ENCODE measurements at regions of chr17 and their contacts with region 1.

Region 1: DNA sequence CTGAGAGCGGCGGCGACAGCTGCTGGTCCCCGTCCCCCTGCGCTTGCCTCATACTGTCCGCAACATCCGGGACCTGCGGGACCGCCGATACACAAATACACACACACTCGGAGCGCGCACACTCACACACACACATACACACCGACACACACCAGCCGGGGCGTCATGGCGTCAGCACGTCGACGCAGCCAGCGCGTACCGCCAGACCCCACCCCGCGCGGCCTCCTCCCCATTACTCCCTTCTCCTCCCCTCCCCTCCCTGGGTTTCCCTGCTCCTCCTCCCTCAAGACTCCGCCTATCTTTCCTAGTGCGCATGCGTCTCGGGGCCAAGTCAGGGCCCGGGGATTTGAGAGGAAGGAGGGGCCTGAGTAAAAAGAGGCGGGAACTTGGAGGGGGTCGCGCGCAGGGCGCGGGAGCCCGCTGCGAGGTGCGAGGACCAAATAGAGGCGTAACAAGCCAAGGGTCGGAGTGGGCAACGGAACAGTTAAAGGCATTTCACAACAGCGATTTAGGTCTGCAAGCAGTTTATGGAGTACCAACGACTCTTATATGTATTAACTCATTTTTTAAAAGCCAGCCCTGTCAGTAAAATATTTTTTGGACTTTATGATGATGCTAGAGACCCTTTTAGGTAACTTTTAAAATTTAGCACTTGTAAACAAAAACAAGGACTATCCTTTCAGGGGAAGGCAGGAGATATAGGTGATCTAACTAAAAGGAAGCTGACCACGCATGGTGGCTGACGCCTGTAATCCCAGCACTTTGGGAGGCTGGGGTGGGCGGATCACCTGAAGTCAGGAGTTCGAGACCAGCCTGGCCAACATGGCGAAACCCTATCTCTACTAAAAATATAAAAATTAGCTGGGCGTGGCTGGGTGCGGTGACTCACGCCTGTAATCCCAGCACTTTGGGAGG is at the start of gene SPOP:
- DNase-seq: peak; percentile 99
- H3K4me3 ChIP-seq: peak within 1 kb of the TSS; percentile 71 to 78 (median 71)
- H3K27ac ChIP-seq: peak within 1 kb of the TSS; percentile 83
- H3K4me1 ChIP-seq: peaks cover 12% of the 10 kb centered on the region
- H3K27me3 ChIP-seq: no peaks in the 10 kb centered on the region
- CTCF ChIP-seq: no peak
- total RNA-seq, gene SPOP: 36.0 to 49.8 TPM

Region 2: DNA sequence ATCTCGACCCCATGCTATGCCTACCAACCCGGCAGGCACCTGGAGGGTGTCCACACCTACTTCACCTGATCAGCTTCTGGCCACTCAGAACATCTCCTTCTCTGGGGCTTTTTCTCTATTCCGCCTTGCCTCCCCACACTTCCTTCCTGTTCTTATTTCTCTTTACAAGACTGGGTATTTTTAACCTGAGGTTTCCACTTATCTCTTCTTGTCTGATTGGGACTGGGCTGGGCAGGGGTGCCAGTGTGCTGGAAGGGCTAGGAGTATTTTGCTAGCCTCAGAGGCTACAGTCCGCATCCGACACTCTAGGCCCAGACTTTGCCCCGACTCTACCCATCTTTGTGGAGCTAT is 289.9 kb before region 1 on chr17:
- CTCF ChIA-PET with region 1: no interaction called
- dilution Hi-C with region 1: no loop called
- in situ Hi-C with region 1: no loop called
- intact Hi-C with region 1: no loop called
- DNase-seq: no peak
- H3K4me3 ChIP-seq: no peak overlapping the region
- H3K27ac ChIP-seq: no peak overlapping the region
- H3K4me1 ChIP-seq: no peaks in the 10 kb centered on the region
- H3K27me3 ChIP-seq: no peaks in the 10 kb centered on the region
- CTCF ChIP-seq: no peak

Region 3: DNA sequence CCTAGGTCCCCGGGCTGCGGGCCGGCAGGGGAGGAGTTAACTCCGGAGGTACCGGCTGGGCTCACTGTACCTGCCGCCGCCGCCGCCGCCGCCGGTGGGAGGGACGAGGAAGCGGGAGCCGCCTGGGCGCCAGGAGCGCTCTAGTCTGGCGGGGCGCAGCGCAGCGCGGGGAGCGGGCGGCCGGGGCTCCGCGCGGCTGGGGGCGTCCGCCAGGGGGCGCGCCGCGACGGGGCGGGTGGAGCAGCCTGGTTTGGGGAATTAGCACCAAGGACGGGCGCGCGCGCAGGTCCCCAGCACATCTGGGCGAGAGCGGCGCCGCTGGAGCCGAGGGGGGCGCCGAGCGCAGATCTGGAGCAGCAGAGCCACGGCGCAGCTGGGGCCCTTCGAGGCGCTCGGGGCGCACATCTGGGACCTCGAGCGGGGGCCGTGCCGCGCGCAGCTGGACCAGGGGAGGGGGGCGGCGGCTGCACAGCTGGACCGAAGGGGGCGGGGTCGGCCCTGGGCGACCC is 102.6 kb before region 1 on chr17 and contains the start of gene NXPH3:
- CTCF ChIA-PET with region 1: no interaction called
- dilution Hi-C with region 1: no loop called
- in situ Hi-C with region 1: no loop called
- intact Hi-C with region 1: loop called (anchors 5 kb)
- DNase-seq: peak; percentile 59
- H3K4me3 ChIP-seq: peak within 1 kb of the TSS; percentile 58 to 60 (median 59)
- H3K27ac ChIP-seq: no peak within 1 kb of the TSS
- H3K4me1 ChIP-seq: peaks cover 11% of the 10 kb centered on the region
- H3K27me3 ChIP-seq: no peaks in the 10 kb centered on the region
- CTCF ChIP-seq: peak; percentile 40 to 45
- total RNA-seq, gene NXPH3: 0.33 to 0.35 TPM

Region 4: GRCh38 chr17:49616601-49617131 is 61.5 kb before region 1 on chr17:
- CTCF ChIA-PET with region 1: no interaction called
- dilution Hi-C with region 1: no loop called
- in situ Hi-C with region 1: no loop called
- intact Hi-C with region 1: loop called (anchors 5 kb)
- DNase-seq: peak; percentile 32
- H3K4me3 ChIP-seq: no peak overlapping the region
- H3K27ac ChIP-seq: no peak overlapping the region
- H3K4me1 ChIP-seq: peaks cover 8% of the 10 kb centered on the region
- H3K27me3 ChIP-seq: no peaks in the 10 kb centered on the region
- CTCF ChIP-seq: no peak

Region 5: GRCh38 chr17:49637050-49637449 is 41.1 kb before region 1 on chr17:
- CTCF ChIA-PET with region 1: no interaction called
- dilution Hi-C with region 1: loop called (anchors 5 kb)
- in situ Hi-C with region 1: no loop called
- intact Hi-C with region 1: loop called (anchors 5 kb)
- DNase-seq: no peak
- H3K4me3 ChIP-seq: no peak overlapping the region
- H3K27ac ChIP-seq: no peak overlapping the region
- H3K4me1 ChIP-seq: no peaks in the 10 kb centered on the region
- H3K27me3 ChIP-seq: no peaks in the 10 kb centered on the region
- CTCF ChIP-seq: no peak

Region 6: DNA sequence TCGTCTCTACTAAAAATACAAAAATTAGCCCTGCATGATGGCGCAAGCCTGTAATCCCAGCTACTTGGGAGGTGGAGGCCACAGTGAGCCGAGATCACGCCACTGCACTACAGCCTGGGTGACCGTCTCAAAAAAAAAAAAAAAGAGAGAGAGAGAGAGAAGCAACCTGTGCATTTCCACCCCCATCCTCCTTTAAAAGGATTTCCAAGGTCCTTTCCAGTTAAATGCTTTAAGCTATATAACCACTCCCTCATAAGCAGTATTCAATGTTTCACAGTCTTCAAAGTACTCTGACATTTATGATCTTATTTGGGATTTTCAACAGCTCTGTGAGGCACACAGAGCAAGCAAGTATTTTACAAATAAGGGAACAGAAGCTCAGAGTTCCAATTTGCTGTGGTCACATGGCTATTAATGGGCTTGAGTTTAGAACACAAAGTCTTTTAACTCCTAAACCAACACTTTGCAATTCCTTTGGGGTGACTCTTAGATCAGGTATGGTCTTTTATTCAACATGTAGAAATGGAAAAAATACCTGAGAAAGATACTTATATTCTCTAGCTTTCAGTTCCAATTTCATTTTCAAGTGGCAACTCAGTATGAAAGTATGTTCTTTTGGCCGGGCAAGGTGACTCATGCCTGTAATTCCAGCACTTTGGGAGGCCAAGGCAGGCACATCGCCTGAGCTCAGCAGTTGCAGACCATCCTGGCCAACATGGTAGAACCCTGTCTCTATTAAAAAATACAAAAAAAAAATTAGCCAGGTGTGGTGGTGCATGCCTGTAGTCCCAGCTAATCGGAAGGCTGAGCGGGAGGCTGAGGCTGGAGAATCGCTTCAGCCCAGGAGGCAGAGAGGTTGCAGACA is 31.6 kb before region 1 on chr17:
- CTCF ChIA-PET with region 1: no interaction called
- dilution Hi-C with region 1: no loop called
- in situ Hi-C with region 1: no loop called
- intact Hi-C with region 1: loop called (anchors 2 kb)
- DNase-seq: peak; percentile 85
- H3K4me3 ChIP-seq: peak overlapping the region; percentile 26 to 39 (median 37)
- H3K27ac ChIP-seq: peak overlapping the region; percentile 62
- H3K4me1 ChIP-seq: peaks cover 32% of the 10 kb centered on the region
- H3K27me3 ChIP-seq: no peaks in the 10 kb centered on the region
- CTCF ChIP-seq: no peak

Region 7: DNA sequence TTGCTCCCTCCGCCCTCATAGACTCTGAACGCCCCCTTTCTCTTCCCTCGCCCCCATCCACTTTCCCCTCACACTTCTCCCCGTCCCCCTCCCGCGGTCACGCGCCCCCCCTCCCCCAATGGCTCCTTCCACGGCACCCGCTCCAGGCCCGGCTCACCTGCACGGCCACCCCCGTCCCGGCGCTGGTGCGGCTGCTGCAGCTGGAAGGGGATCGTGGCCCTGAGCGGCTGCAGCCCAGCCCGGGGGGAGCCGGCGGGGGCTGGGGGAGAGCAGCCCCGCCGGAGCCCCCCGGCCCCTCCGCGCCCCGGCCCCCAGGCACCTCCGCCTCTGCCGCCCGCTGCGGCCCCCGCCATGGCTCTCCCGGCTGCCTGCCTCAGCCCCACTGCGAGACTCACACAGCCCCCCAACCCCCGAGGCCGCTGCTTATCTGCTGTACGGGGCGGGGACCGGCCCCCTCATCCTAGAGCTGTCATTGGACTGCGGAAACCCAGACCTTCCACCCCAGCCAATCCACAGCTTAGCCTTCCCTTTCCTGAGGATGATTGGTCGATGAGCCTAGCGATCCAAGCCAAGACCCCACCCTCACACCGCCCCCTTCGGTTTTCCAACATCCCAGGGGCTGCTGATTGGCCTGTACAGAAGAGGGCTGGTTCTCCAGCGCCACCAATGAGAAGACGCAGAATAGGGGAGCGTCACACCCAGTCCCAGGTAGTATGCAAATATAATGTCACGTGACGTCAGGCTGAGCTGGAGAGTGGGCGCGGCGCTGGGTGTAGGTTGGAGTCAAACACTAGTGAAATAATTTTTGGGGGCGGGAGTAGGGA is 85.8 kb after region 1 on chr17 and contains the start of gene FAM117A:
- CTCF ChIA-PET with region 1: no interaction called
- dilution Hi-C with region 1: no loop called
- in situ Hi-C with region 1: no loop called
- intact Hi-C with region 1: no loop called
- DNase-seq: peak; percentile 99
- H3K4me3 ChIP-seq: peak within 1 kb of the TSS; percentile 58 to 73 (median 66)
- H3K27ac ChIP-seq: peak within 1 kb of the TSS; percentile 23
- H3K4me1 ChIP-seq: peaks cover 23% of the 10 kb centered on the region
- H3K27me3 ChIP-seq: no peaks in the 10 kb centered on the region
- CTCF ChIP-seq: no peak
- total RNA-seq, gene FAM117A: 2.8 to 5.9 TPM

Region 8: GRCh38 chr17:50128441-50129352 is 450.5 kb after region 1 on chr17:
- CTCF ChIA-PET with region 1: no interaction called
- dilution Hi-C with region 1: no loop called
- in situ Hi-C with region 1: no loop called
- intact Hi-C with region 1: no loop called
- DNase-seq: no peak
- H3K4me3 ChIP-seq: no peak overlapping the region
- H3K27ac ChIP-seq: no peak overlapping the region
- H3K4me1 ChIP-seq: peaks cover 10% of the 10 kb centered on the region
- H3K27me3 ChIP-seq: no peaks in the 10 kb centered on the region
- CTCF ChIP-seq: no peak